Colonic mucosa (tissue), 4 donors: ENCODE measurements at regions of chr9 and their contacts with region 1.

Region 1: DNA sequence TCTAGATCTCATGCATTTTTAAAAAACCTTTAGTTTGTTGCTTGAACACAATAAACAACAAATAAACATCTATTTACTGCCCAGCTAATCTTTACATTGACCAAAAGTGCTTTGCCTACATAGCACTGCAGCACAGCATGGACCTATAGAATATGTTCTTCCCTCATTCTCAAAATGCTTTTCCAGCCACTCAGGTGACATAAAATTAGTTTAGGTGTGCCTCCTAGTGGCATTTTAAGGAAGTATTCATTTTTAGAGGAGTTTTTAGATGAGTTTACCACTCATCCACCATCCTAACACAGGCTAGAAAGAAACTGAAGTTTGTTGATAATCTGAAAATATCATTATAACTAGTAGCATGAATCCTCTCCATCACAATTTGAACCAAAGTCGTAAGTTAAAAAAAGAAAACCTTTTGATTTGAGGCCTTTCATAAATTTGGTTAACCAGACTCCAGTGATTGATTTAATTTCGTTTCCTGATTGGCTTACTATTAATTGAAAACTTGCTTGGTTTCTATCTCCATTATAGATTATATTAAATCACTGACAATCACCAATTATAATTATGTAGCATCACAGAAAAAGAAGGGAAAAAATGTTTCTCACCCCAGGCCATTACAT is 12.6 kb downstream of the PLGRKT start:
- DNase-seq: no peak
- H3K4me3 ChIP-seq: no peak overlapping the region
- H3K27ac ChIP-seq: no peak overlapping the region
- H3K4me1 ChIP-seq: no peaks in the 10 kb centered on the region
- H3K27me3 ChIP-seq: no peaks in the 10 kb centered on the region
- CTCF ChIP-seq: peak; percentile 38

Region 2: DNA sequence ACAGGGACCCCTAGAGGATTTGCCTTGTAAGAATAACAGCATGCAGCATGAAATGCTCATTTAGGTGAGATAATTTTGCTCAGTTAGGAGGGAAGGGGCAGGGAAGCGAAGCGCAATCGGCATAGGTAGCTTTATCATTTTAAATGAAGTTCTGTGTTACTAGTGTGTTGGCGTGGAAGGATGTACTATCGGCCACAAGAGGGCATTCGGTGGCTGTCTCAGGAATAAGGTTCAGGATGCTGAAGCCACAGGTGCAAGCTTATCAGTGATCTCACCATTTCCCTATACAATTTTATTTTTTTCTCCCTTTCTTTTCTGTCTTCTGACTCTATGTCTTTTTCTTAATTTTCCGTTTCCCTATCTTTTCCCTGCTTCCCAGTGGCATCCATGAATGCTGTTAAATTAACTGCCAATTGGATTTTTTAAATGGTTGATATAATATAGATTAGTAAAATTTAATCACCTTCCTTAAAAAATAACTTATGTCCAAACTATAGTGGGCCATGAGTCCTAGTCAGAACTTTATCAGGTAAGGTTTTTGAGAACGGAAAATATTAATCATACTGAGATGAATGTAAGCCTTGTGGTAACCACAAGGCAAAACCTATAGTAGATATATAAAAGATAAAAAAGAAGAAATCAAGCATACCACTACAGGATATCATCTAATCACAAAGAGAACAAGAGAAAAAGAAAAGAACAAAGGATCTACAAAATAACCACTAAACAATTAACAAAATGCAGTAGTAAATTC is 238.5 kb before region 1 on chr9:
- intact Hi-C with region 1: loop called (anchors 5 kb)
- DNase-seq: peak; percentile 55
- H3K4me3 ChIP-seq: no peak overlapping the region
- H3K27ac ChIP-seq: no peak overlapping the region
- H3K4me1 ChIP-seq: no peaks in the 10 kb centered on the region
- H3K27me3 ChIP-seq: no peaks in the 10 kb centered on the region
- CTCF ChIP-seq: peak; percentile 63

Region 3: DNA sequence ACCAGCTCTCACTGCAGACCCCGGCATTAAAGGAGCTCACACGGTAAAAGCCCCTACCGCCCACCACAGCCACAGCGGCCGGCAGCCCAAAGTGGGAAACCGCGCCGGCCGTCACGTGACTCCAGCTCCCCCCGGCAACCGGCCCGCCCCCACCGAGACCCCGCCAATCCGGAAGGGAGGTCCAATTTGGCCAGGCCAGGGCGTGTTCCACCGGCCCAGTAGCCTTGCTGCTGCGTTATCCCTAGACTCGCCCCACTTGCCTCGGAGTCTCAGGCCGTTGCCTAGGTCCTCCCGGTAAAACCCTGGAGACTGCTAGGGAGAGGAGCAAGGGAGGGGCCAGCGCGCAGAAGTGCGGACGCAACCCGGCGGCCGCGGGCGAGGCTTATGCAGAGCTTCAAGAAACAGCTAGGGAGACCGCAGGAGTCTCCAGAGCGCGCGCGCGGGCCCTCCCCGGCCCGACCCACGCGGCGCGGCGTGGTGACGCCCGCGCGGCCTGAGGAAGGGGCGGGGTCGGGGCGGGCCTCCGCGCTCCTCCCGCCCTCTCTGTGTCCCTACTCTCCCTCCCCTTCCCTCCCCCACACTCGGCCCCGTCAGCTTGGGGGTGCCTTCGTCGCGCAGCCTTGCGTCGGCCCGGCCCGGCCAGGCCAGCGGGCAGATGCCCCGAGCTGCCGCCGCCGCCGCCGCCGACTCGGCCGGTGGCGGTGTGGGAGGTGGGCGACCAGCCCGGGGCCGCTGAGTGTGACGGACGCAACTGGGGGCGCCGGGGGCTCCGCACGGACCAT is 203.6 kb after region 1 on chr9 and contains the start of gene RIC1:
- intact Hi-C with region 1: no loop called
- DNase-seq: peak; percentile 92
- H3K4me3 ChIP-seq: peak within 1 kb of the TSS; percentile 95
- H3K27ac ChIP-seq: peak within 1 kb of the TSS; percentile 97
- H3K4me1 ChIP-seq: peaks cover 4% of the 10 kb centered on the region
- H3K27me3 ChIP-seq: no peaks in the 10 kb centered on the region
- CTCF ChIP-seq: no peak
- total RNA-seq, gene RIC1: 12.8 to 17.9 TPM